Heart right ventricle (tissue), 16 donors: ENCODE measurements at regions of chr22 and their contacts with region 1.

Region 1: DNA sequence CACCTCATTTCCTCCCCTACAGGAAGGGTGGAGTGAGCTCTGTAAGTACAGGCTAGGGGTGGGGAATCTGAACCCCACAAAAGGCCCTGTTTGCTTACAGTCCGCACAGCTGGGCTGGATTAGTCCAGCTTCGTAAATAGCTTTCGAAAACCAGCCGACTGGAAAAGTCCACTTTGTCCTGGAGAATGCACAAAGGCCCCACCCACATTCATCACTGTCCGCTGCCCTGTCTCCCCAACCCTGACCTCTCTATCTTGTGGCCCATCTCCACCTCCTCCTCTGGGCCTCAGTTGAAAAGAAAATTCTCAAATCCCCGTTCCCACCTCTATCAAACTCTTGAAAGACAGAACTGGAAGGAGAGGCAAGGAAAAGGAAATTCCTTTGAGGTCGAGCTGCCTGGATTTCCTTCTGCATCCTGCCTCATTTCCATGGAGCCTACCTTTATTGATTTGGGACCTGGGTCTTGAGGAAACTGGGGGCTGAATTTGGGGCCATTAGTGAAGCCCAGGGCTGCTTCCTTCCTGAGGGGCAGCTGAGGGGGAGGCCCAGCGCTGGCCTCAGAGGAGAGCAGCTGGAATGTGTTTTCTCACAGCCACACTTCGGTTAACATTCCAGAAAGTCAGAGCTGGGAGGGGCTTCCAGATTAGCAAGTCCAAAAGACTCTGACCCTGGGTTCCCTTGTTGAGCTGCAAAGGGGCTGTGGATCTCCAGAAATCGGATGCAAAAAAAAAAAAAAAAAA is 147.6 kb downstream of the FBXO7 start:
- DNase-seq: peak; percentile 50 to 67
- ATAC-seq: peak; percentile 51 to 79 (median 71)
- H3K4me3 ChIP-seq: no peak overlapping the region
- H3K27ac ChIP-seq: peak overlapping the region; percentile 67 to 93 (median 89)
- H3K4me1 ChIP-seq: peaks cover 36 to 90% (median 76%) of the 10 kb centered on the region in 9 donors
- H3K27me3 ChIP-seq: no peaks in the 10 kb centered on the region
- CTCF ChIP-seq: no peak

Region 2: GRCh38 chr22:32534252-32535240 is 87.6 kb before region 1 on chr22:
- intact Hi-C with region 1: loop called in 7 of 10 experiments (anchors 2 to 10 kb)
- DNase-seq: peak; percentile 59 to 72
- ATAC-seq: peak in 6 of 8 donors; percentile 8 to 37 (median 26)
- H3K4me3 ChIP-seq: no peak overlapping the region
- H3K27ac ChIP-seq: peak overlapping the region; percentile 76 to 93 (median 82)
- H3K4me1 ChIP-seq: peaks cover 14 to 70% (median 61%) of the 10 kb centered on the region in 9 donors
- H3K27me3 ChIP-seq: no peaks in the 10 kb centered on the region
- CTCF ChIP-seq: no peak

Region 3: DNA sequence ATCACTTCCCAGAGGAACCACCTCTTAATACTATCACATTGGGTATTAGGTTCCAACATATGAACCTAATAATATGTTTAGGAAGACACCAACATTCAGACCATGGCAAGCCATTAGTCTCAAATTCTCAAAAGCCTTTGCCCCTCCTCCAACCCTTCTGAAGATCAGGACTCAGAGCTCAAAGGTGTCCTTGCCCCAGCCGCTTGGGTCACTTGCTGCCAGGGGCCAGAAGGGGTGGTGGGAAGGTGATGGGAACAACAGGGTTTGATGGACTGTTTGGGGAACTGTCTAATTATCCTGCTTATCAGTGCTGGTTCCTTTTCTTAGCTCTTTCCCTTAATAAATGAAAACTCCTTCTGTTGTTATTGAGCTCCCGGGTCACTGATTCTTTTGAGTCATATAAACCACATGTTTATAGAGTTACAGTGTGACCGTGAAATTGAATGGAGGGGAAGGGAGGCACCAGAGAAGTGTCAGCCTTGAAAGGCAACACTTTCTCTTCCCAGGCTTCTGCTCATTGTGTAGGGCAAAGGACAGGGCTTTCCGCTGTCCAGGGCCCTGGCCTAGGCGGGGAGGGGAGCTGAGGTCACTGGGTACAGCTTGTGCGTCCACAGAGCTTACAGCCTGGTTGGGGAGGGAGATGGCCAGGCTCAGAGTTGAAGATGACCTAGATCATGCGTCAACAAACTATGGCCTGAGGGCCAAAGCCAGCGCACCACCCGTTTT is 42.5 kb before region 1 on chr22:
- intact Hi-C with region 1: loop called in 1 of 10 experiments (anchors 5 kb)
- DNase-seq: peak in 1 of 2 donors; percentile 61
- ATAC-seq: peak; percentile 64 to 92 (median 82)
- H3K4me3 ChIP-seq: no peak overlapping the region
- H3K27ac ChIP-seq: peak overlapping the region in 7 of 10 donors; percentile 18 to 67 (median 49)
- H3K4me1 ChIP-seq: peaks cover 0 to 30% (median 7%) of the 10 kb centered on the region in 9 donors
- H3K27me3 ChIP-seq: no peaks in the 10 kb centered on the region
- CTCF ChIP-seq: no peak

Region 4: GRCh38 chr22:32754413-32755041 is 132.4 kb after region 1 on chr22:
- intact Hi-C with region 1: loop called in 1 of 10 experiments (anchors 5 kb)
- DNase-seq: peak in 1 of 2 donors; percentile 44
- ATAC-seq: peak; percentile 70 to 89 (median 82)
- H3K4me3 ChIP-seq: no peak overlapping the region
- H3K27ac ChIP-seq: peak overlapping the region in 7 of 10 donors; percentile 11 to 83 (median 64)
- H3K4me1 ChIP-seq: peaks cover 0 to 25% (median 14%) of the 10 kb centered on the region in 9 donors
- H3K27me3 ChIP-seq: no peaks in the 10 kb centered on the region
- CTCF ChIP-seq: no peak

Region 5: DNA sequence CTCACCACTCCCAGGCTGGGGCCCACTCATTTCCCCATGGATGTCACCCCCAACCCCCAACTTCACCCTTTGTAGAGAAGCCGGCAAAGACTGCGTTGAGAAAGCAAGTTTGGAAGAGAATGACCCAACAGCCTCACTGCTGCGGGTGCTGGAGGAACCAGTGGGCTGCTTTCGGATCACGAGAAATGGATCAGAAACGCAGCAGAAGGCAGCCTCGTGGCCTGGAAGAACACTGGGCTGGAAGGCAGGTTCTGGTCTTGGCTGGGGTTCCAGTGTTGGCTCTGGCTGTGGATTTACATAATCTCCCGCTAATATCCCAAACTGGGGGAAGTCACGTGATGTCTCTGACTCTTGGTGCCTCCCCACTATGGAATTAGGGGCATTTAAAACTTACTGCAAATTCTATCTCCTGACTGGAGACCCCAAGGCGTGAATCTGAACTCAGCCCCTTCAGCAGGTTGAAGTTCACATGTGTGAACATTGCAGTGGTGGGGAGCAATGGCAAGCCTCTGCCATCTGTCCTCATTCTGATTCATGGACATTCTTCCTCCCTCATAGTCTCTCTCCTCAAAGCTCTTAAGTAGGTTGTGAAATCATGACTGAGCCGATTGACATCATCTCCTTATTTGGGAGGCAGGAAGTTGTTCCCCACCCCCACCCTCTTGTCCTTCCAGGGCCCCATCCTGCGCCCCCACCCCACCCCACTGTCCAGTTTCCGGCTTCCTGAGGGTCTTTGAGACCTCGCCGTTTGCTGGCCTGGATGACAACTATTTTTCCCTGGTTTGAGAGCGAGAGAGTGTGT is 142.4 kb after region 1 on chr22:
- intact Hi-C with region 1: loop called in 2 of 10 experiments (anchors 5 kb)
- DNase-seq: peak; percentile 47 to 65
- ATAC-seq: peak; percentile 50 to 83 (median 70)
- H3K4me3 ChIP-seq: no peak overlapping the region
- H3K27ac ChIP-seq: peak overlapping the region; percentile 50 to 88 (median 75)
- H3K4me1 ChIP-seq: peaks cover 14 to 50% (median 46%) of the 10 kb centered on the region in 9 donors
- H3K27me3 ChIP-seq: peaks cover 0 to 13% (median 0%) of the 10 kb centered on the region in 7 donors
- CTCF ChIP-seq: no peak